ENCODE measurements at regions of chr2 and their contacts with region 1.

Region 1: GRCh38 chr2:2639251-2640139 is 308.4 kb upstream of the MYT1L start:
- DNase-seq: no peak
- ATAC-seq: no peak
- H3K4me3 ChIP-seq: no peak overlapping the region
- H3K27ac ChIP-seq: no peak overlapping the region
- H3K4me1 ChIP-seq: no peaks in the 10 kb centered on the region
- H3K27me3 ChIP-seq: no peaks in the 10 kb centered on the region
- CTCF ChIP-seq: no peak
- POLR2A ChIP-seq: no peak

Region 2: GRCh38 chr2:2597712-2598111 is 41.8 kb before region 1 on chr2:
- intact Hi-C with region 1: loop called (anchors 5 kb)
- DNase-seq: no peak
- ATAC-seq: no peak
- H3K4me3 ChIP-seq: no peak overlapping the region
- H3K27ac ChIP-seq: no peak overlapping the region
- H3K4me1 ChIP-seq: no peaks in the 10 kb centered on the region
- H3K27me3 ChIP-seq: no peaks in the 10 kb centered on the region
- CTCF ChIP-seq: no peak
- POLR2A ChIP-seq: no peak